A549 (cell line): ENCODE measurements at regions of chr7 and their contacts with region 1.

Region 1: GRCh38 chr7:134016223-134016941 is 110.8 kb upstream of the LRGUK start:
- DNase-seq: peak; percentile 57 to 65
- ATAC-seq: peak; percentile 88 to 96
- H3K4me3 ChIP-seq: no peak overlapping the region
- H3K27ac ChIP-seq: no peak overlapping the region
- H3K4me1 ChIP-seq: peaks cover 7% of the 10 kb centered on the region; the same call in 1 of the 3 replicates
- CTCF ChIP-seq: peak; percentile 98
- EP300 ChIP-seq: no peak
- POLR2A ChIP-seq: no peak
- RAD21 ChIP-seq: peak; percentile 95 to 96

Region 2: DNA sequence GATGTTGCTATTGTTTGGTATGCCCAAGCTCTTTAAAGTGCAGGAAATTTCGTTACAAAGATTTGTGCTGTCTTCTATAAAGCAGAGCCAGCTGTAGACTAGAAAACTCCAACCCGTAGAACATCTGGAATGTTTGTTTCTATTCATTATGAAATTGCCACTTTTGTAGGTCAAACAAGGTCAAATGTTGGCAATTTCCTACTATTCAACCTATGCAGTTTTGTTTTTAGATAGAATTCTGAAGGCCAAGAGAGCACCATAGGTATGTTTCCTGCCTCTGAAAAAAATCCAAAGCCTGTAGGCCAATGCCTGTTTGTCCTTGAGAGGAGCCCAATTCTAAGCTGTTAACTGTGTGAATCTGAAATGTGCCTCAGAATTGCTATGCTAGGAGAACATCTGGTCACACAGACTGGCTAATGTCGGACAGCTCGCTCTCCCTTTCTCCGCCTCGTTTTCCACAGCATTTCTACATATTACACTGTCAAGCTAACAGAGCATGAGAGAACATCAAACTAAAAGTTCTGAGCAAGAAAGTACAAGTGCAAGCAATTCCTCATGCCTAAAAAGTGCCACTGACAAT is 156.4 kb before region 1 on chr7:
- CTCF ChIA-PET with region 1: no interaction called
- POLR2A ChIA-PET with region 1: no interaction called
- DNase-seq: no peak
- ATAC-seq: no peak
- H3K4me3 ChIP-seq: no peak overlapping the region
- H3K27ac ChIP-seq: no peak overlapping the region
- H3K4me1 ChIP-seq: peaks cover 13% of the 10 kb centered on the region; the same call in 2 of the 3 replicates
- CTCF ChIP-seq: no peak
- EP300 ChIP-seq: no peak
- POLR2A ChIP-seq: no peak
- RAD21 ChIP-seq: no peak

Region 3: DNA sequence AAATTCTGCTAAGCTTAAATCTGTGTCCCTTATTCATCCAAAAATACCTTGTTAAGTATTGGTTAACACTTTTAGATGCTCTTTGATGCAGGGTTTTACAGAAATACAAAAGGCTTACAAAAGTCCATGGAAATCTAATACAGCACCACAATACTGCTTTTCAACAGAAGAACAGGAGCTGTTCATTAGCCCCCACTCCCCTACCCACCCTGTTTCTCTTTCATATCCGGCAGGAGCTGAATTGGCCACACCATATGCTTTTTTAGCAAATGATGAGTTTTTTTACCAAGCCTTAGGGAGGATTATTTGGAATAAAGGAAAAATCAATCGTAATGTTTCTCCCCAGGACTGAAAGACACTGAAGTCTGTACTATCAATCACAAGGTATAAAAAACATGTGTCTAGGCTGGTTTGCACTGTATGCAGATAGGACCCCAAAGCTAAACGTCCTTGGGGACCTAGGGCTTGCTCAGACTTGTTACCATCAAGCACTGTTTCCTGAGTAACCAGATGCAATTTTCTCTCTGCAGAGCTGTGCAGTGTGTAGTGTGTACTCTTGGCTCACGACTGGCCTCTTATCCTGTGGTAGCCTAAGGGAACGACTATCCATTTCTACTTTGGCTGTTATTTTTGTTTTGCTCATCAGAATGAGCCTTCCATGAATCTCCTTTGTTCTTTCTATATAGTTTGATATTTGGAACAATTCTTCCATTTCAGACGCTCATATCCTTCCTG is 32.5 kb before region 1 on chr7:
- CTCF ChIA-PET with region 1: interaction called, 10 read pairs
- POLR2A ChIA-PET with region 1: no interaction called
- DNase-seq: no peak
- ATAC-seq: no peak; a peak in 1 of 6 replicates
- H3K4me3 ChIP-seq: no peak overlapping the region
- H3K27ac ChIP-seq: no peak overlapping the region
- H3K4me1 ChIP-seq: no peaks in the 10 kb centered on the region
- CTCF ChIP-seq: no peak
- EP300 ChIP-seq: no peak
- POLR2A ChIP-seq: no peak
- RAD21 ChIP-seq: no peak

Region 4: GRCh38 chr7:133993547-133993946 is 22.8 kb before region 1 on chr7:
- CTCF ChIA-PET with region 1: interaction called, 15 read pairs
- POLR2A ChIA-PET with region 1: no interaction called
- DNase-seq: no peak
- ATAC-seq: no peak
- H3K4me3 ChIP-seq: no peak overlapping the region
- H3K27ac ChIP-seq: no peak overlapping the region
- H3K4me1 ChIP-seq: no peaks in the 10 kb centered on the region
- CTCF ChIP-seq: no peak
- EP300 ChIP-seq: no peak
- POLR2A ChIP-seq: no peak
- RAD21 ChIP-seq: no peak

Region 5: GRCh38 chr7:134004829-134005505 is 11.4 kb before region 1 on chr7:
- CTCF ChIA-PET with region 1: interaction called, 17 read pairs
- POLR2A ChIA-PET with region 1: no interaction called
- DNase-seq: no peak
- ATAC-seq: no peak
- H3K4me3 ChIP-seq: no peak overlapping the region
- H3K27ac ChIP-seq: no peak overlapping the region
- H3K4me1 ChIP-seq: no peaks in the 10 kb centered on the region
- CTCF ChIP-seq: no peak
- EP300 ChIP-seq: no peak
- POLR2A ChIP-seq: no peak
- RAD21 ChIP-seq: no peak

Region 6: GRCh38 chr7:134165252-134165651 is 148.9 kb after region 1 on chr7:
- CTCF ChIA-PET with region 1: no interaction called
- POLR2A ChIA-PET with region 1: no interaction called
- DNase-seq: no peak
- ATAC-seq: no peak
- H3K4me3 ChIP-seq: no peak overlapping the region
- H3K27ac ChIP-seq: no peak overlapping the region
- H3K4me1 ChIP-seq: no peaks in the 10 kb centered on the region
- CTCF ChIP-seq: no peak
- EP300 ChIP-seq: no peak
- POLR2A ChIP-seq: no peak
- RAD21 ChIP-seq: no peak

Region 7: DNA sequence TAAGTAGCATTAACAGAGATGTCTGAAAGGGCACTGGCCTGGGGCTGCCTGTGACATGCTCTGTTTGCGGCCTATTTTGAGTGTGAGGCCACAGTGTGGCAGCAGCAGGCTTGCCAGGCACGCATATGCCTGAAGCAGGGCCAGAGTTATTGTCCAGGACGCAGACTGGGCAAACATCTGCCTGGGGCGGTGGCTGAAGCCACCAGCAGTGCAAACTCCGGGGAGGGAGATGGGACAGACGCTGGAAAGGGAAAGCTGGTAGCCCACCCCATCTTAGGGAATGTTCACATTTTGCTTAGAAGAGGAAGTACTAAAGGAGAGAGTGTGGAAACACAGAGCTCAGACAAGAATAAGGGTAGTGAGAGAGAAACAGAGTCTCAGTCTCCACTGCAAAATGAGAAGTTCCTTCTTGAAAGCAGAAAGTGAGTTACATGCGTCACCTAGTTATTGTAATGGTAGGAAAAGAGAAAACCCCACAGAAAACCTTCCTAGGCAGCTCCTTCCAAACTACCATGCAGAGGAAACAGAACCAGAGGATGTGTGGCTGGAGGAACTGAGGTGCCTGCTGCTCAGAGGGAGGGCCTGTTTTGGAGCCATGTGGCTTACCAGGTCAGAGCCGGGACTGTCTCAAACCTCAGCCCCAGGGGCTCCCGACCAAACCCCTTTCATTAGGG is 428.0 kb after region 1 on chr7:
- CTCF ChIA-PET with region 1: no interaction called
- POLR2A ChIA-PET with region 1: no interaction called
- DNase-seq: no peak
- ATAC-seq: peak in 1 of 2 experiments; percentile 11; a peak in 2 of 6 replicates
- H3K4me3 ChIP-seq: no peak overlapping the region
- H3K27ac ChIP-seq: peak overlapping the region; percentile 5 to 94; a peak in 4 of 6 replicates
- H3K4me1 ChIP-seq: peaks cover 52% of the 10 kb centered on the region
- CTCF ChIP-seq: 0 out of 3 replicates have a peak, but pooled peaks have one; percentile 21
- EP300 ChIP-seq: no peak
- POLR2A ChIP-seq: no peak
- RAD21 ChIP-seq: peak; percentile 40 to 49; a peak in 3 of 5 replicates

Region 8: DNA sequence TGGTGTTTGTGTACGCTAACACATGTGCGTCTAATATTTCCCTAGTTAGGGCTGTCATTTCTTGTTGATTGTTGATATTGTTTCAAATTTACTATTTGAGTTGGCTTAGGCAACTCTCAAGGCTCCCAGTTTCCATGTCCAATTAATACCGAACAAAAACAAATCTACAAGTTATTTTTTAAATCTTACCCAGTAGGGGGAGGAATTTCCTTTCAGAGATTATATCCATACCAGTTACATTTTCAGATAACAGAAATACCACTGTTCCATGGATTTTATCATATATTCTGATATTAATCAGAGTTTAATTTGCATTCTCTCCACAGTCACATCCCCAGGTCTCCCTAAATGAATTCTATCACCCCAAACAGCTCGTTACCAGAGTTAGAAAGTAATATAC is 503.7 kb after region 1 on chr7:
- CTCF ChIA-PET with region 1: interaction called, 15 read pairs
- POLR2A ChIA-PET with region 1: no interaction called
- DNase-seq: peak in 1 of 2 experiments; percentile 67
- ATAC-seq: peak; percentile 59 to 67; a peak in 5 of 6 replicates
- H3K4me3 ChIP-seq: peak overlapping the region; percentile 32
- H3K27ac ChIP-seq: peak overlapping the region; percentile 76 to 81
- H3K4me1 ChIP-seq: peaks cover 65% of the 10 kb centered on the region
- CTCF ChIP-seq: peak; percentile 76
- EP300 ChIP-seq: no peak
- POLR2A ChIP-seq: no peak
- RAD21 ChIP-seq: peak; percentile 70 to 78; a peak in 4 of 5 replicates